ENCODE measurements at regions of chr15 and their contacts with region 1.

Region 1: DNA sequence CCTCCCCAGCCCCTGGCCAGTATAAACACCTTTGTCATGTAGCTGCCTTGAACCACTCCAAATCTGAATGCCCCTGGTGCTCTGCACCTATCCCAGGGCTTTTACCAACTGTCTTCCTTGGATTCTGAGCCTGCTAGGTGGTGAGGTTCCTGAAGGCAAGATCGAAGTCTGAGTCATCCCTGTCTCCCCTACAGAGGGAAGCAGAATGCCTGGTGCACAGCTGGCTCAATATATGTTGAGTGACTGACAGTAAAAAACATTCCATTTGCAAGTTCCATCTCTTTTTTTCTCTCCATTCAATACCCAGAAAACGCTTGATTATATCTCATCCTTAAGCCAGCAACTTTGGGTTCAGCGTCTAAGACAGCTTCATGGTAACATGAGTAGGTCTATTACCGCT is 24.7 kb downstream of the SLC24A1 start:
- DNase-seq: no peak
- H3K4me3 ChIP-seq: no peak overlapping the region
- H3K27ac ChIP-seq: no peak overlapping the region
- H3K4me1 ChIP-seq: peaks cover 0 to under 1% of the 10 kb centered on the region in 2 donors
- H3K27me3 ChIP-seq: no peaks in the 10 kb centered on the region
- CTCF ChIP-seq: no peak
- POLR2A ChIP-seq: no peak

Region 2: GRCh38 chr15:66278056-66278455 is 631.6 kb after region 1 on chr15:
- intact Hi-C with region 1: loop called (anchors 5 kb)
- DNase-seq: no peak
- H3K4me3 ChIP-seq: no peak overlapping the region
- H3K27ac ChIP-seq: no peak overlapping the region
- H3K4me1 ChIP-seq: no peaks in the 10 kb centered on the region
- H3K27me3 ChIP-seq: no peaks in the 10 kb centered on the region
- CTCF ChIP-seq: no peak
- POLR2A ChIP-seq: no peak

Measured in breast epithelium (tissue), 4 donors.